ENCODE measurements at regions of chr15 and their contacts with region 1.

Region 1: GRCh38 chr15:66287461-66288057 is 5.8 kb upstream of the DIS3L start:
- DNase-seq: no peak
- ATAC-seq: peak; percentile 34; the same call in 2 of the 3 replicates
- H3K4me3 ChIP-seq: no peak overlapping the region
- H3K27ac ChIP-seq: no peak overlapping the region
- H3K4me1 ChIP-seq: no peaks in the 10 kb centered on the region; the same call in 1 of the 2 replicates
- H3K27me3 ChIP-seq: no peaks in the 10 kb centered on the region
- CTCF ChIP-seq: peak; percentile 42 to 56 (median 51)
- EP300 ChIP-seq: no peak
- POLR2A ChIP-seq: no peak
- RAD21 ChIP-seq: peak; percentile 59

Region 2: DNA sequence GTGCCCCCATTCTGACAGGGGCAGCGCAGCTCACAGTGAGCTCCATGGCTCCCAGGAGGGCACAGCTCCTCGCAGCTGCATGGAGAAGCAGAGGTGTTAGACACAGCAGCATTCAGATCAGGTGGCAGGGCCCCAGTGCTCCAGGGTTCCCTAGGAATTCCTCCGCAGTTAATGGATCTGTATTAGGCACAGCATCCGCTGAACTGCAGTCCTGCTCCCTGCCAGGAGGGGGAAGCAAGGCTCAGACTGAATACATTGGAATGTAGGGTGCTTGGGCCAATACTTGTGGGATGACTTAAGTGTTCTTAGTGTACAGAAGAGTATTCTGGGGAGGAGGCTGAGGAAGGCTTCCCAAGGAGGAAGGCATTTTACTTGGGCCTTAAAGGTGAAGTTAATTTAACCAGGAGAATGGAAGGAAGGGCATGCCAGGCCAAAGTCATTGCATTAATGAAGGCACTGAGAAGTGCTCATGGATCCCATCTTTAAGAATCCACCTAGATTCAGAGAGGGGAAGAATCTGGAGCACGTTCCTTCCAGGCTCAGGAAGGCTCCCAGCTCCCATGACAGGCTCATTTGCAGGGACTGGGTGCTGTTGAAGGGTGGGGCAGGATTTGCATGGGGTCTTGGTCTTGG is 306.6 kb before region 1 on chr15:
- CTCF ChIA-PET with region 1: interaction called, 3 read pairs
- POLR2A ChIA-PET with region 1: interaction called, 4 read pairs
- RAD21 ChIA-PET with region 1: no interaction called
- SMC1A ChIA-PET with region 1: no interaction called
- in situ Hi-C with region 1: no loop called
- intact Hi-C with region 1: loop called (anchors 10 kb)
- DNase-seq: no peak
- ATAC-seq: peak; percentile 43
- H3K4me3 ChIP-seq: no peak overlapping the region
- H3K27ac ChIP-seq: no peak overlapping the region
- H3K4me1 ChIP-seq: no peaks in the 10 kb centered on the region; the same call in 1 of the 2 replicates
- H3K27me3 ChIP-seq: peaks cover 0 to 1% of the 10 kb centered on the region in 2 experiments; a peak in 1 of 4 replicates
- CTCF ChIP-seq: peak; percentile 53 to 68 (median 56)
- EP300 ChIP-seq: no peak
- POLR2A ChIP-seq: no peak
- RAD21 ChIP-seq: peak; percentile 52

Region 3: DNA sequence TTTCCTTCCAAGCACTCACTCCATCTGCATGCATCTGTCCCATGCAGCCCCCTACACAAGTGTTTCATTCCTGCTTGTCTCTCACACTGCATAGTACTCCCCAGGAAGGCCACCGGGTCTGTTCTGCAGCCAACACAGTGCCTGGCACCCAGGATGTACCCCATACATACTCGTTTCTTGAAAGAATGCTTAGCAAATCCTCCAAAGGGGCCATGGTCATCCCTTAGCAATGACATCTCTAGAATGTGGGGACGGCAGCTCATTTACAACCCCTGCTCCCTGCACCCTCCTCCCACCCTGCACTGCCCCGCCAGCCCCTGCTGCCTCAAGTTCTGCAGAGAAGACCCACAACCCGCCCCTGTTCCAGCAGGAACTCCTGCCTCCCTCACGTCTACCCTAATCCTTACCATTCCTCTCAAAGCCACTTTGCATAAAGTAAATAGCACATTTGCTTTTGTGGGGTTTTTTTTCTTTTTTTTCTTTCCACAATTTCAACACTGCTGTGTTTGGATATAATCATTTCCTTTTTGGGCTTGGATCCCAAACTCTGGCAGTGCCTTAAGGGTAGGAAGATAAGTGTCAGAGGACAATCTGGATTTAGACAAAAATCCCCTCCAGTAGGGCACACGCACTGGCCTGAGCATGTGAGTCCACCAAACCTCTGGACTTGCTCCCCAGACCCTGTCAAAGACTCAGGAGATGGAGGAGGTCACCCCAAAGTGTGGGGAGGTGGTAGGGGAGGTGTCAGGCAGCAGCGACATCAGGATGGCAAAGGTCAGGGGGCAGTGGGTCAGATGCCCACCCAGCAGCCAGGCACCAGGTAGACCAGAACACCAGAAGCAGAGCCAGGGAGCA is 102.4 kb before region 1 on chr15:
- CTCF ChIA-PET with region 1: no interaction called
- POLR2A ChIA-PET with region 1: no interaction called
- RAD21 ChIA-PET with region 1: no interaction called
- SMC1A ChIA-PET with region 1: no interaction called
- in situ Hi-C with region 1: no loop called
- intact Hi-C with region 1: no loop called
- DNase-seq: no peak
- ATAC-seq: no peak
- H3K4me3 ChIP-seq: no peak overlapping the region
- H3K27ac ChIP-seq: no peak overlapping the region
- H3K4me1 ChIP-seq: no peaks in the 10 kb centered on the region
- H3K27me3 ChIP-seq: peaks cover 0 to 5% of the 10 kb centered on the region in 2 experiments; a peak in 2 of 4 replicates
- CTCF ChIP-seq: no peak
- EP300 ChIP-seq: no peak
- POLR2A ChIP-seq: no peak
- RAD21 ChIP-seq: no peak

Region 4: DNA sequence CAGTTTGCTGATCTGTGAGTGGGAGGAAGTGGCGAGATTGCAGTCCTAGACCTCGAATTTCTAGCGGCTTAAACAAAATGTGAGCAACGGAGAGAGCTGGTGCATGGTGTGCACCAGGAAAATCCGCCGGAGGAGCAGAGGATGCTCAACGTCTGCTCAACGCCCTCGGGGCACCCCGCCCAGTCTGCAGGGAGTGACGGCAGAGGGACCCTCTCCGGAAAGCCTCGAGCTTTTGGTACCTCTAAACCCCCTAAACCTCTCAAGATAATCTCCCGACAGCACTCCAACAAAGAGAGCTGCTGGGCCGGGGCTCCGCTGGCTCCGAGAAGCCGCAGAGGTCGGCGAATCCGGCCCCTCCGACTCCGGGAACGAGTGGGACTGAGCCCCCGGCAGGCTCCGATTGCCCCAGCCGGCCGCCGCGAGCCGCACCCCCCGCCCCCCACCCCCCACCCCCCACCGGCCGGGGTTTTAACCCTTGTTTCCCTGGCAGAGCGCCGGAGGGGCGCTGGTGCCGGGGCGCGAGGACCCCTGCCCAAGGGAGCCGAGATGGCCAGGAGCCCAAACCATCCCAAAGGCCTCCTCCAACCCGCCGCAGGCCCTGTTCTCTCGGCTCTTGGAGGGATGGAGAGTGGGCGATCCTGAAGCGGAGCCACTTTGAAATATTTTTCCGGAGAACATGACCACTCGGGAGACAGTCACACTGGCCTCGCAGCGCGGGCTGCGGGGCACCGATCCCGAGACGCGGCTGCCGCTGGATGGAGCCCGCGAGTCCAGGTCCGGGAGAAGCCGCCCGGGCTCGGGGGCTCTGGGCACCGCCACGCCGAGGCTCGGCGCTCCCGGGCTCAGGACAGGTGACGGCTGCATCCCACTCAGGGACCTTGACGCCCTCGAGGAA is 35.5 kb before region 1 on chr15:
- CTCF ChIA-PET with region 1: interaction called, 8 read pairs
- POLR2A ChIA-PET with region 1: no interaction called
- RAD21 ChIA-PET with region 1: no interaction called
- SMC1A ChIA-PET with region 1: interaction called, 3 read pairs
- in situ Hi-C with region 1: no loop called
- intact Hi-C with region 1: loop called (anchors 5 kb)
- DNase-seq: no peak
- ATAC-seq: peak; percentile 82
- H3K4me3 ChIP-seq: 0 out of 2 replicates have a peak overlapping the region, but pooled peaks have one; percentile 35
- H3K27ac ChIP-seq: no peak overlapping the region
- H3K4me1 ChIP-seq: peaks cover 3% of the 10 kb centered on the region; the same call in 1 of the 2 replicates
- H3K27me3 ChIP-seq: peaks cover 25 to 35% of the 10 kb centered on the region in 2 experiments
- CTCF ChIP-seq: peak; percentile 54 to 62 (median 58); a peak in 4 of 6 replicates
- EP300 ChIP-seq: no peak
- POLR2A ChIP-seq: no peak
- RAD21 ChIP-seq: 0 out of 2 replicates have a peak, but pooled peaks have one; percentile 22